ENCODE measurements at regions of chr14 and their contacts with region 1.

Region 1: GRCh38 chr14:36070031-36070719 is 106.3 kb downstream of the PTCSC3 start:
- DNase-seq: peak; percentile 65
- ATAC-seq: peak; percentile 55
- H3K4me3 Mint-ChIP-seq: no peak overlapping the region
- H3K27ac Mint-ChIP-seq: no peak overlapping the region
- H3K4me1 Mint-ChIP-seq: peaks cover 2% of the 10 kb centered on the region
- H3K27me3 Mint-ChIP-seq: peaks cover 28% of the 10 kb centered on the region
- CTCF ChIP-seq: peak; percentile 62

Region 2: DNA sequence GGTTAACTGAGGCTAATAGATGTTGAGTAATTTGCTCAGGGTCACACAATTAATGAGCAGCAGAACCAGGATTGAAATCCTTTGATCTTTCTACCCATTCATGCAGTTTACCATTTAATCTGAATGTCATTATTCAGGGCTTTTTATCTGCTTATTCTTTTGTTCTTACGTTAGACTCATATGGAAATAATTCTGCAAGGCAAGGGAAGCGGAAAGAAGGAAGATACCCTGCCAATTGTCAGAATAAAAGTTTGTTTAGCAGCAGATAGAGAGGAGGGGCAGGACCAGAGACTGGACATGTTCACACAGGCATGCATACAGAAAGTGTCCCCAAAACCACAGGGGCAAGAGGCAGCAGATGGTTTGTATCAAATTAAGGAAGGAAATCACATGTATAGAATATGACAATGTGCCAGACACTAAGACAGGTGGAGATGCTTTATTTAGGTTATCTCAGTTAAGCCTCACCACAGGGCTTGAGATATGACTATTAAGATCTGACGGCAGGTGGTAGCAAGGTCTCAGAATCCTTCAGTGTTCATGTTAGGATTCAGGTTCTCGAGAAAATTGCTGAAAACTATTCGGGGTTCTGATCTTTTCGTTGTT is 214.2 kb before region 1 on chr14:
- CTCF ChIA-PET with region 1: interaction called, 10 read pairs
- POLR2A ChIA-PET with region 1: no interaction called
- intact Hi-C with region 1: no loop called
- DNase-seq: no peak
- ATAC-seq: no peak
- H3K4me3 Mint-ChIP-seq: no peak overlapping the region
- H3K27ac Mint-ChIP-seq: no peak overlapping the region
- H3K4me1 Mint-ChIP-seq: no peaks in the 10 kb centered on the region
- H3K27me3 Mint-ChIP-seq: no peaks in the 10 kb centered on the region
- CTCF ChIP-seq: no peak

Region 3: GRCh38 chr14:35959835-35960234 is 110.3 kb before region 1 on chr14:
- CTCF ChIA-PET with region 1: interaction called, 20 read pairs
- POLR2A ChIA-PET with region 1: no interaction called
- intact Hi-C with region 1: no loop called
- DNase-seq: no peak
- ATAC-seq: no peak
- H3K4me3 Mint-ChIP-seq: no peak overlapping the region
- H3K27ac Mint-ChIP-seq: no peak overlapping the region
- H3K4me1 Mint-ChIP-seq: no peaks in the 10 kb centered on the region
- H3K27me3 Mint-ChIP-seq: no peaks in the 10 kb centered on the region
- CTCF ChIP-seq: no peak

Region 4: DNA sequence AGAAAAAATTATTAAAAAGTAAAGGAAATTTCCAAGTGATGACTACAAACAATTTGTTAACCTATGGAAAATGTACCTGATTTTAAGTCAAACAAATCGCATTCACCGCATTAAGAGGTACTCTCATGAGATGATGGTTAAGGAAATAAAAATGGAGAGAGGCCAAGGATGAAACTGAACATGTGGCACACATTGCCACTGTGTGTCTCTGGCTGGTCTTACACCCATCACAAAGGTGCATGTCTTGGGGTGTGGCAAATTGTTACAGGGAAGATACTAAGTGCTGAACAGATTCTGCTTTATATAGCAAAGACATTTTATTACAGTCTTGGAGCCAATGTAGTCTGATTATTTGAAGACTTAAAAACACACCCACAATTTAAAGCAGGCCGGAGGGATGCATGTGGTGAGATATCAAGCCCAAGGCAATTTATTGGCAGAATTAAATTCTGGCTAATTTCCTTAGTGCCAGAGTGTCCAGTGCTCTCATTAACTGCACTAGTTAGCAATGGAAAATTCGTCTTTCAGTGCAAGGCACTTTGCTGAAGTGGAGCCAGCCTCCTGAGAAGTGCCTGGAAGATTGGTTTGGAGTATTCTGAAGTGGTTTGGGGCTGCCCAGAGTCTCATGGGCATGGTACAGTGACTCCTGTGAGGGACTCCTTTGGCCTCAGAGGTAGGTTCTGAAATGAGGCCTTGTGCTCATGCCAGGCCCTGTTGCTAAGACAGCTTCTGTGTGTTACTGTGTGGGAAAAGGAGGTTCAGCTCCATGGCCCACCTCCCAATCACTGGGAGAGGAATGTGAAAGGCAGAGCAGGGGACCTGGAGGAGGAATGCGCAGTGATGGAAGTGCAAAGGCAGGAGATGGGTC is 77.1 kb before region 1 on chr14:
- CTCF ChIA-PET with region 1: no interaction called
- POLR2A ChIA-PET with region 1: no interaction called
- intact Hi-C with region 1: no loop called
- DNase-seq: no peak
- ATAC-seq: no peak
- H3K4me3 Mint-ChIP-seq: no peak overlapping the region
- H3K27ac Mint-ChIP-seq: no peak overlapping the region
- H3K4me1 Mint-ChIP-seq: no peaks in the 10 kb centered on the region
- H3K27me3 Mint-ChIP-seq: no peaks in the 10 kb centered on the region
- CTCF ChIP-seq: no peak

Region 5: GRCh38 chr14:36021030-36021422 is 49.1 kb before region 1 on chr14:
- CTCF ChIA-PET with region 1: interaction called, 13 read pairs
- POLR2A ChIA-PET with region 1: no interaction called
- intact Hi-C with region 1: no loop called
- DNase-seq: no peak
- ATAC-seq: no peak
- H3K4me3 Mint-ChIP-seq: no peak overlapping the region
- H3K27ac Mint-ChIP-seq: no peak overlapping the region
- H3K4me1 Mint-ChIP-seq: peaks cover 12% of the 10 kb centered on the region
- H3K27me3 Mint-ChIP-seq: peaks cover 5% of the 10 kb centered on the region
- CTCF ChIP-seq: no peak

Region 6: DNA sequence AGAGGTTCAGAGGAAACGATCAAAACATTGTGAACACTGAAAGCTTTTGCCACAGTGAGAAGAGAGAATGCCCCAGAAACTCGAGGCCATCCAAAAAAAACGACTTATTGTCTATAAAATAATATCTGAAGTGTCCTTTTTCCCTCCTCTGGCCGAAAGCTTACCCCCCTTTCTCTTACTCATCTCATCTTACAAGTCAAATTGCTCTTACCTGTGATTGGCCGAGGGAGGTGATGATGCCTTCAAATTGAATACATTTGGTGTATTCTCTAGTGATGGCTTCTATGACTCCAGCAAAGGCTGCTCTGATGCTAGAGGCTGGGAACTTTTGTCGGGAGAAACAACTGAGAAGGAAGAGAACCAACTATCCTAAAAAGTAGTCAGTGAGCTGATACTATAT is 15.7 kb after region 1 on chr14:
- CTCF ChIA-PET with region 1: interaction called, 18 read pairs
- POLR2A ChIA-PET with region 1: no interaction called
- intact Hi-C with region 1: no loop called
- DNase-seq: no peak
- ATAC-seq: no peak
- H3K4me3 Mint-ChIP-seq: no peak overlapping the region
- H3K27ac Mint-ChIP-seq: no peak overlapping the region
- H3K4me1 Mint-ChIP-seq: no peaks in the 10 kb centered on the region
- H3K27me3 Mint-ChIP-seq: peaks cover 4% of the 10 kb centered on the region
- CTCF ChIP-seq: no peak

Region 7: GRCh38 chr14:36365766-36366165 is 295.6 kb after region 1 on chr14:
- CTCF ChIA-PET with region 1: interaction called, 12 read pairs
- POLR2A ChIA-PET with region 1: no interaction called
- intact Hi-C with region 1: no loop called
- DNase-seq: no peak
- ATAC-seq: no peak
- H3K4me3 Mint-ChIP-seq: no peak overlapping the region
- H3K27ac Mint-ChIP-seq: no peak overlapping the region
- H3K4me1 Mint-ChIP-seq: no peaks in the 10 kb centered on the region
- H3K27me3 Mint-ChIP-seq: peaks cover 6% of the 10 kb centered on the region
- CTCF ChIP-seq: no peak

Region 8: DNA sequence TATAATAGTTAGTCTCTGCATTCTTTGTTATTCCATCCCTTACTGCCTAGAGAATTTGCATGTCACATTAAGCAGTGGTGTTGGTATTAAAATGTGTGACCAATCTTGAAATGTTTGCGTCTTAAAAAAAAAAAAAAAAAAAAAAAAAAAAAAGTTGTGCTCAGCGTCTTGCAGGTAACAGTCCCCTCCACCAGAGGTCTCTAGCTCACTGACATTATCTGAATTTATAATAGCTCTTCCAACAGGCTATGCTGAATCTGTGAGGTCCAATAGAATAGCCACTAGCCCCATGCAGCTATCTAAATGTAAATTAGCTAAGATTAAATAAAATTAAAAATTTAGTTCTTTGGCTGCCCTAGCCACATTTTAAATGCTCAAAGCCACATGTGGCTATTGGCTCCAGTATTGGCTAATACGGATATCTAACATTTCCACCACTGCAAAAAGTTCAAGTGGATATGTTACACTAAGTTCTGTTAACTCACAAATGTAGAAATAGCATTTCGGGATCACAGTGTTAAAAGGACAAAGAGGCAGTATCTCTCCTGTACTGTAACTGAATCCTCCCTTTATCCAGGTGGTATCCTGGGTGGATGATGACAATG is 483.6 kb after region 1 on chr14:
- CTCF ChIA-PET with region 1: interaction called, 12 read pairs
- POLR2A ChIA-PET with region 1: no interaction called
- intact Hi-C with region 1: no loop called
- DNase-seq: peak; percentile 20
- ATAC-seq: peak; percentile 58
- H3K4me3 Mint-ChIP-seq: no peak overlapping the region
- H3K27ac Mint-ChIP-seq: no peak overlapping the region
- H3K4me1 Mint-ChIP-seq: no peaks in the 10 kb centered on the region
- H3K27me3 Mint-ChIP-seq: peaks cover 8% of the 10 kb centered on the region
- CTCF ChIP-seq: peak; percentile 58

Measured in activated CD8-positive, alpha-beta T cell treated with anti-CD3 and anti-CD28 coated beads for 36 hours (primary cell).